Activated T-helper 2 cell treated with anti-CD3 and anti-CD28 coated beads, Interferon-gamma antibody, Interleukin-2, Interleukin-4, amounts not matched to agents 10 μg/mL and 5 μg/mL and 100 μg/mL, durations not matched to agents 14 hours and 24 hours and 36 hours (primary cell): ENCODE measurements at regions of chr22 and their contacts with region 1.

Region 1: DNA sequence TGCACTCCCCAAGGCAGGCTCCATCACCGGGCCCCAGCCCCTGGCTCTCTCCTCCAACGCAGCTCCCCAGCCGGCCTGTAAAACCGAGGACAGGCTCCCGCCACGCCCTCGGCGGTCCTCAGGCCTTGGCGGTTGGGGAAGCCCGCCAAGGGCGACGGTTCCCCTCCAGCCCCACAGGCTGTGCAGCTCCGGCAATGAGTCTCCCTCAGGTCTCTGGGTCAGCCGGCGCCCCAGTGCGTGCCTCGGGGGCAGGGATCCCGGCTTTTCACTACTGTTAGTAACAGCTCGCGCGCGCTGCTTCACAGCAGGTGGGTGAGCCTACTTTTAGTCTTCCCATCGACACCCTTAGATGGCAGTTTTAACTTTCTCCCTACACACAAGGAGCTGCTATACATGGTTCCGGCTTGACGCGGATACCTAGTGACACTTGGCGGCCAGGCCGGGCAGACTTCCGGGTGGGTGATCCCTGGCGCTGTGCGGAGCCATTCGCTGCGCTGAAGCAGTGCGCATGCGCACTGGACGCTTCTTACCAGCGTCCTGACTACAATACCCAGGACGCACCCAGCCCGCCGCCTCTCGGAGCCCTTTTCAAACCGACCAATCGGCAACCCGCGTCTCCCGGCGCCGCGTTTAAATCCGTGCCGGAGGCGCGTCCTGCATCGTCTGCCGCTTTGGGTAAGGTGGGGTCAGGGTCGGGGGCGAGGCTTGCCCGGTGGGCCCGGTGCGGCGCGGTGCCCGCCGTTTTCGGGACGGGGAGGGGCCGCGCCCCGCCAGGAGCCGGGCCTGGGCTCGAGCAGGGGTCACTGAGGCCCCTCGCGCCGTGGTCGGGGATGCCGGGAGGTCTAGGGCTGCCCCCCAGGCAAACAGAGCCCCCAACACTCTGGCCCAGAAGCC is at the start of gene GTSE1:
- DNase-seq: peak; percentile 98
- H3K4me3 Mint-ChIP-seq: peak within 1 kb of the TSS; percentile 91
- H3K27ac Mint-ChIP-seq: peak within 1 kb of the TSS; percentile 86
- H3K4me1 Mint-ChIP-seq: peaks cover 39% of the 10 kb centered on the region
- H3K27me3 Mint-ChIP-seq: no peaks in the 10 kb centered on the region
- total RNA-seq, gene GTSE1: 46.1 and 47.7 TPM in 2 replicates

Region 2: DNA sequence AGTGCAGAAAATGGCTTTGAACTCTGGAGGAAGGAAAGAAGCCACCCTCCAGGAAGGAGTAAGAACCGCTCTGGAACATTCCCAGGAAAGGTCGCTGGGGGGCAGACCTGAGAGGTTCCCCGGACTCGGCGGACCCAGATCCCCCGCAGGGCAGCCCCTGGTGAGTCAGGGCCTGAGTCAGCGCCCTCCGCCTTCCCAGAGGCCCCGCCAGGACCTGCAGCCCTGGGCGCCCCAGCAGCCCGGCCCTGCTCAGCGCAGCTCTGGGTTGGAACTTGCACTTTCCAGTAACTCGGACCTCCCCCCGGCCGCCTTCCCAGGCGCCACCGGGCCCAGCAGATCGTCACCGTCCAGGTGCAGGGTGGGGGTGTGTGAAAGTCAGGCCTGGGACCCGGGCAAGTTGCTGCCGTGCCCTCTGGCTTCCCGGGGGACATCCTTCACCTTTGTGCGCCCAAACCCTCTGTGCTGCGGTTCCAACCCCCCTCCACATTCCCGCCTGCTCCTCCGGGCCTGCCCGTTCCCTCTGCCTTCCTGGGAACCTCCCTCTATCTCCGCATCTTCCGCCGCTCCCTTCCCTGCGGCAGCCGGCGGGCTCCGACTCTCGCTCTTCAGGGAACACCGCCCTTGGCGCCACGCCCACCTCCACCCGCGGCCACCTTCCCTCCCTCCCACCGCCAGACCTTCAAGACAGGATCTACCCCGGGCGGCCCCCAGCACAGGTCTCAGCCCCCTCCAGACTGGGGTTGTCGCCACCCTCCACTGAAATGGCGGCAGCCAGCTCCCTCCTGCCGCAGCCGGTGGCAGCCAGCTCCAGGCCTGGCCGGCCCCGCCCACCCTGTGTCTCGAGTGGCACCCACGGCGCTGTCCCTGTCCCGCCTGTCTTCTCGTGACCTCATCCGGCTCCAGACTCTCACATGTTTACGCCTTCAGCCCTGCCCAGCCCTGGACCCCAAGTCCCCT is 282.8 kb before region 1 on chr22:
- intact Hi-C with region 1: loop called (anchors 2 kb)
- DNase-seq: peak; percentile 60
- H3K4me3 Mint-ChIP-seq: peak overlapping the region; percentile 83
- H3K27ac Mint-ChIP-seq: peak overlapping the region; percentile 77
- H3K4me1 Mint-ChIP-seq: peaks cover 5% of the 10 kb centered on the region
- H3K27me3 Mint-ChIP-seq: peaks cover 6% of the 10 kb centered on the region

Region 3: GRCh38 chr22:46035742-46036557 is 260.6 kb before region 1 on chr22:
- intact Hi-C with region 1: loop called (anchors 1 kb)
- DNase-seq: peak; percentile 99
- H3K4me3 Mint-ChIP-seq: peak overlapping the region; percentile 84
- H3K27ac Mint-ChIP-seq: peak overlapping the region; percentile 86
- H3K4me1 Mint-ChIP-seq: peaks cover 12% of the 10 kb centered on the region
- H3K27me3 Mint-ChIP-seq: no peaks in the 10 kb centered on the region

Region 4: DNA sequence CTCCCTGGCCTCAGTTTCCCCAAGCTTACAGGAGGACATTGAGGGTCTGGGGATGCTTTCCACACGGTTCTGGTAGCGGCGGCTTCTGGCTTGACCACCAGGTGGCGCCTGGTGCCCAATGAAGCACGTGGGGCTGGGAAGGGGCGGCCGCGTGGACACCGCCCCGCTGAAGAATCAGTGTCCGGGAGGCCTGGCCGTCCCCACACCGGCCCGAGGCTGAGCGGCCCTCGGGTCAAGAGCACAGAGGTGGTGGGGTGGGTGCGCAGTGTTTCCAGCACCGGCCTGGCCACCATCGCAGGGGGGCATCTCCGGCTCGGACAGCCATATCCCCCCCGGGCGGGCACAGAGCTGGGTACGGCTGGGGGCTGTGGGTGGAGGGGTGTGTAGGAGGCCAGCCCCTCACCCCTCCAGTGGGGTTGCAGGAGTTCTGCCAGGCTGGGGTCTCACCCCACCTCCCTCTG is 174.0 kb before region 1 on chr22:
- intact Hi-C with region 1: loop called (anchors 5 kb)
- DNase-seq: peak; percentile 49
- H3K4me3 Mint-ChIP-seq: no peak overlapping the region
- H3K27ac Mint-ChIP-seq: no peak overlapping the region
- H3K4me1 Mint-ChIP-seq: no peaks in the 10 kb centered on the region
- H3K27me3 Mint-ChIP-seq: no peaks in the 10 kb centered on the region

Region 5: GRCh38 chr22:46150034-46150654 is 146.4 kb before region 1 on chr22 and contains the start of gene PPARA:
- intact Hi-C with region 1: loop called (anchors 2 kb)
- DNase-seq: peak; percentile 82
- H3K4me3 Mint-ChIP-seq: peak within 1 kb of the TSS; percentile 81
- H3K27ac Mint-ChIP-seq: no peak within 1 kb of the TSS
- H3K4me1 Mint-ChIP-seq: peaks cover 12% of the 10 kb centered on the region
- H3K27me3 Mint-ChIP-seq: peaks cover 34% of the 10 kb centered on the region
- total RNA-seq, gene PPARA: 14.0 and 14.5 TPM in 2 replicates

Region 6: GRCh38 chr22:46250035-46250782 is 46.3 kb before region 1 on chr22 and contains the start of gene CDPF1:
- intact Hi-C with region 1: loop called (anchors 2 kb)
- DNase-seq: peak; percentile 91
- H3K4me3 Mint-ChIP-seq: peak within 1 kb of the TSS; percentile 79
- H3K27ac Mint-ChIP-seq: peak within 1 kb of the TSS; percentile 84
- H3K4me1 Mint-ChIP-seq: peaks cover 30% of the 10 kb centered on the region
- H3K27me3 Mint-ChIP-seq: no peaks in the 10 kb centered on the region
- total RNA-seq, gene CDPF1: 7.7 and 10.7 TPM in 2 replicates

Region 7: GRCh38 chr22:46309526-46310085 is 13.1 kb after region 1 on chr22:
- intact Hi-C with region 1: no loop called
- DNase-seq: no peak
- H3K4me3 Mint-ChIP-seq: no peak overlapping the region
- H3K27ac Mint-ChIP-seq: no peak overlapping the region
- H3K4me1 Mint-ChIP-seq: peaks cover 11% of the 10 kb centered on the region
- H3K27me3 Mint-ChIP-seq: no peaks in the 10 kb centered on the region